ENCODE measurements at regions of chr3 and their contacts with region 1.

Region 1: GRCh38 chr3:6444888-6445658 is 415.8 kb upstream of the GRM7 start:
- DNase-seq: no peak
- H3K4me3 ChIP-seq: no peak overlapping the region
- H3K27ac ChIP-seq: no peak overlapping the region
- H3K4me1 ChIP-seq: no peaks in the 10 kb centered on the region
- H3K27me3 ChIP-seq: no peaks in the 10 kb centered on the region
- CTCF ChIP-seq: no peak
- POLR2A ChIP-seq: no peak

Region 2: GRCh38 chr3:5463991-5464390 is 981.1 kb before region 1 on chr3:
- intact Hi-C with region 1: loop called (anchors 5 kb)
- DNase-seq: no peak
- H3K4me3 ChIP-seq: no peak overlapping the region
- H3K27ac ChIP-seq: no peak overlapping the region
- H3K4me1 ChIP-seq: no peaks in the 10 kb centered on the region
- H3K27me3 ChIP-seq: no peaks in the 10 kb centered on the region
- CTCF ChIP-seq: no peak
- POLR2A ChIP-seq: no peak

Measured in vagina (tissue), 2 donors.